BJ (cell line): ENCODE measurements at regions of chr1 and their contacts with region 1.

Region 1: DNA sequence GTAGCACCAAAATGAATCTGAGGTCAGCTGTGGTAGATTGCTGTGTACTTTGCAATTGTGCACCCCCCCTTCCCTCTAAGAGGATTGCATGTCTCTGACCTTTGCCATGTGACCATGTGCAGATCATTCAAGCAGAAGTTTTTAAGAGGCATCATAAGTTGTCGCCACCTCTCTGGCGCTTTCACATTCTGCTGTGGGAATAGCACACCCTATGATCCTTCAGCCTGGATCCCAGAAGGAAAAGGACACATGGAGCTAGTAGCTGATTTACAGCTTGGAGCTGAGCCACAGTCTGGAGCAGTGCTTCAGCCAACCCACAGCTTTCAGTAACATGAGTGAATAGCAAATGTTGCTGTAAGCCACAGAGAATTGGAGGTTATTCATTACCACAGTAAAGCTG is 158.5 kb downstream of the TSEN15 start:
- DNase-seq: peak; percentile 47
- H3K4me3 ChIP-seq: no peak overlapping the region
- H3K27me3 ChIP-seq: peaks cover 6% of the 10 kb centered on the region
- CTCF ChIP-seq: 0 out of 2 replicates have a peak, but pooled peaks have one; percentile 2

Region 2: GRCh38 chr1:184188037-184188436 is 22.0 kb before region 1 on chr1:
- CTCF ChIA-PET with region 1: interaction called, 3 read pairs
- POLR2A ChIA-PET with region 1: interaction called, 13 read pairs
- DNase-seq: no peak
- H3K4me3 ChIP-seq: no peak overlapping the region
- H3K27me3 ChIP-seq: peaks cover 6% of the 10 kb centered on the region; the same call in 1 of the 2 replicates
- CTCF ChIP-seq: no peak